ENCODE measurements at regions of chr2 and their contacts with region 1.

Region 1: GRCh38 chr2:27754138-27754588 is 17.4 kb upstream of the MRPL33 start:
- DNase-seq: peak; percentile 76
- CTCF ChIP-seq: peak; percentile 91

Region 2: DNA sequence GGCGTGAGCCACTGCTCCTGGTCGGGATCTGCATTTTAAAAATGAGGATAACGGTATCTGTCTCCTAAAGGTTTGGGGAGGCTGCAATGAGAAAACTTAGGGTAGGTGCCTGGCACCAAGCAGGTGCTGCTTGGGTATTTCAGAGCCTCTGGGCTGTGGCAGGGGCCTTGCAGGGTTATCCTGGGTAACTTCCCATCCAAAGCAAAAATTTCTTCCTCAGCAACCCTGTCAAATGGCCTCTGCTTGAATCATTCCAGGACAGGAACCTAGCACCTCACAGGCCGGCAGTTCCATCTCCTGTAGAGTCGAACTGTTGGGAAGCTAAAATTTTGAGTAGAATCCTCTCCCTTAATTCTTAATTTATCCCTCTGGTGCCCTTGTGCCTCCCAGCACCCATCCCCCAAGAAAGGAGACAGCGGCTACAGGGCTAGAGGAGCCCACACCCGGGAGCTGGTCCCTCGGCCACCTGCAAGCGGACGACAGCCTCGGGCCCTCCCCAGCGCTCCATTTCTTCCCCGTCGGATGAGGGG is 636.1 kb before region 1 on chr2:
- CTCF ChIA-PET with region 1: no interaction called
- POLR2A ChIA-PET with region 1: no interaction called
- DNase-seq: no peak
- CTCF ChIP-seq: no peak

Region 3: GRCh38 chr2:27428213-27428977 is 325.8 kb before region 1 on chr2 and contains the start of gene NRBP1:
- CTCF ChIA-PET with region 1: no interaction called
- POLR2A ChIA-PET with region 1: no interaction called
- DNase-seq: peak; percentile 97
- CTCF ChIP-seq: peak; percentile 28

Region 4: DNA sequence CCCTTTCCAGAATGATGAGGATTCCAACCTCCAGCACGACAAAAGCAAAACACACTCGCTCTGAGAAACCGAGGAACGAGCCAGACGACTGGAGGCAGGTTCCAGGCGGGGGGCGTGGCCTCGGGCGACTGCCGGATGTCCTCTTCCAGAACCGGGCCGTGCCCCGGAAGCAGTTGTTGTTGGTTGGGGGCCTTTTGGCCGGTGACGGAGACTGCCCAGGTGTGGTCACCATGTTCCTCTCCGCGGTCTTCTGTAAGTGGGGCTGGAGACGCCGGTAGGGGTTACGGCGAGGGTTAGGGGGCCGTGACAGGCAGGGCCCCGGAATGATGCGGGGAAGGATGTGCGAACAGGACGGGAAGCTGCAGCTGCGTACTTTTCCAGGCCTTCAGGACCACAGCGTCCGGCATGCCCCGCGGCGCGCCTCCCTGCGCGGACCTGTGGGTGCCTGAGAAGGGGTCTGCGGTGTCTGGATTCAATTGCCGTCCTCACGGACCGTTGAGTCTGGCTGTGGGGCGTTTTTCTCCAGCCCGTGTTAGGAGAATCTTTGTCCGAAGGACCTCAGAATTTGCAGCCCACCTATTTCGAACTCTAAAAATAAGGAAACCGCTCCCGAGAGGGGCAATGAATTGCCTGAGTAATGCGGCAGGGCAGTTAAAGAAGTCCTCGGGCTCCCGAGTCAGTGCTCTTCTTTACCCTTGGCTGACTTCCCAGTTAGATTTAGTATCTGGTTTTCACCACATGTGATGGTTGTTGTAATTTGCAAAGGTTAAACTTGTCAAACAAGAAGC is 17.6 kb after region 1 on chr2 and contains the start of gene MRPL33:
- CTCF ChIA-PET with region 1: interaction called, 13 read pairs
- POLR2A ChIA-PET with region 1: no interaction called
- DNase-seq: peak; percentile 97
- CTCF ChIP-seq: no peak

Region 5: DNA sequence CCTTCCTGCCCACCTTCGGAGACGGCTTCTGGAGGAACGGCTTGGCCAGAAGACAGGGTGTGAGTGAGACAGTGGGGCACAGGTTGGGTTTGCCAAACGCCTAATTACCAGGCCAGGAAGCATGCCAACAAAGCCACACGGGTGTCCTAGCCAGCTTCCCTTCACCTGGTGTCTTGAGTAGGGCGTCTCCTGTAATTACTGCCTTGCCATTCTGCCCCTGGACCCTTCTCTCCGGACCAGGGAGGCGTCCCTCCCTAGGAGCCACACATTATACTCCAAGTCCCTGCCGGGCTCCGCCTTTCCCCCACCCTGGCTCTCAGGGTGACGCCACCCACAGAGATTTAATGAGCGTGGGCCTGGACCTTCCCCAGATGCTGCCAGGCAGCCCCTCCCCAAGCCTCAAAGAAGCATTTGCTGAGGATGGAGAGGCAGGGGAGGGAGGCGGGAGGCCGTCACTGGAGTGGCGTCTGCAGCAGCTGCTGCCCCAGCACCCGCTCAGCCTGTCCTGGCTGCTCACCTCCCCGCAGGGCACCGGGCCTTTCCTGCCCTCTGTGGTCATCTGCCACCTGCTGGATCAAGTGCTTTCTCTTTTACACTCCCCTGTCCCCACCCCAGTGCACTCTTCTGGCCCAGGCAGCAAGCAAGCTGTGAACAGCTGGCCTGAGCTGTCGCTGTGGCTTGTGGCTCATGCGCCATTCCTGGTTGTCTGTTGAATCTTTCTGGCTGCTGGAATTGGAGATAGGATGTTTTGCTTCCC is 659.2 kb after region 1 on chr2:
- CTCF ChIA-PET with region 1: interaction called, 10 read pairs
- POLR2A ChIA-PET with region 1: no interaction called
- DNase-seq: no peak
- CTCF ChIP-seq: no peak

Region 6: DNA sequence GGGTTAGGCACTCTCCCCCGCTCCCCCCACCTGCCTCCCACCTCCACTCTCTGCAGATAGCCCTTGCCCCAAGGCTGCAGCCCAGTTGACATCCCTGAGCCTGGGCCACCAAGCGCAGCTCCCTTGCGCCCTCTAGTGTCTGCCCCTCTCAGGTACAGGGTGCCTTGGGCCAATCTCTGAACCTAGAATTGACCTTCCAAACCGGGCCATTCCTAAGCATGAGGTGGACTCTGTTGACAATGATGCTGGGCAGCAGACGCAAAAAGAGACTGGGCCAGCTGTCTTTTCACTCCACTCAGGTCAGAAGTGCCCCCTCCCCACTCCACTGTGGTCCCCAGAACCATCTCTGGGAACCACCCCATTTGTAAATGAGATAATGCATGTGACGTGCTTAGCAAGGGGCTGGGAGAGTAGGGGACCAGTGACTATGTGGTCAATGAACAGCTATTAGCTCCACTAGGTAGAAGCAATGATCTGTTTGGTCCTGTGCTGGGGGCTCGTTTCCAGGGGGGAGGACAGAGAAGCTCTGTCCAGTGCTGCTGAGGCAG is 698.4 kb after region 1 on chr2:
- CTCF ChIA-PET with region 1: interaction called, 21 read pairs
- POLR2A ChIA-PET with region 1: no interaction called
- DNase-seq: peak; percentile 79
- CTCF ChIP-seq: peak; percentile 94

Measured in GM10248 (cell line).